ENCODE measurements at regions of chr1 and their contacts with region 1.

Region 1: GRCh38 chr1:231421993-231422764 is at the start of gene EGLN1:
- DNase-seq: peak; percentile 79
- H3K4me3 Mint-ChIP-seq: peak within 1 kb of the TSS; percentile 81
- H3K27ac Mint-ChIP-seq: peak within 1 kb of the TSS; percentile 89
- H3K4me1 Mint-ChIP-seq: peaks cover 35% of the 10 kb centered on the region
- H3K27me3 Mint-ChIP-seq: no peaks in the 10 kb centered on the region
- total RNA-seq, gene EGLN1: 9.6 to 9.8 TPM

Region 2: DNA sequence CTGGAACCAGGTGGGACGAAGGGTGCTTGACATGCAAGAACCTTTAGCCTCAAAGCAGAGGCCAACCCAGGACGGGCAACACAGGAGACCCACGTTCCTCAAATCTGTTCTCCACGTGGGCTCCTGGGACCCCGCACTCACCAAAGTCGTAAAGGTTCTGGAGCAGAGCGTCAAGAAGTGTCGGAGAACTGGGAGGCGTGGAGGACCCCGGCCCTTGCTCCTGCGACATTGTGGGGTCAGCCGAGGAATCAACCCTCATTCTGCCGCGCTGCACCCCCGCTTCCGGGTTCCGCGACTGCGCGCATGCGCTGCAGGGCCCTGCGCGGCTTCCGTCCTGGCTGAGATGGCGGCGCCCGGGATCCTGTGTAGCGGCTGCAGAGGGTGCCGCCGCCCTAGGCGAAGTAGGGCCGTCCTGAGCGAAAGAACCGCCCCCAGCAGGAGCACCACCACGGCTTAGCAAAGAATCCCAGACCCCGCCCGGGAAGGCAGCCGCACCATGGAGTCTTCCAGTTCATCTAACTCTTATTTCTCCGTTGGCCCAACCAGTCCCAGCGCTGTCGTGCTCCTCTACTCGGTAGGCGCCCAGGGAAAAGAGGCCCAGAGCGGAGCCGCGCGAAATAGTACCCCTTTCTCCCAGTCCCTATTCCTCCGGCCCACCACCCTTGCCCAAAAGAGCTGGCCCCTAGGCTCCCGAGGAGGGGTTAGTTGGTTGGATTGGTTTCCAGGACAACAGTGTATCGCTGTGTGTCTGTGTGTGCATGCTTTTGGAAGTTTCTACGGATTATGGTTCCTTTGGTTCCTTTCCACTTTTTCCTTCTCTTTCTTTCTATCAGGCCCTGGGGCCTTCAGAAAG is 181.1 kb before region 1 on chr1 and contains the start of gene GNPAT:
- CTCF ChIA-PET with region 1: no interaction called
- intact Hi-C with region 1: loop called (anchors 5 kb)
- DNase-seq: peak; percentile 90
- H3K4me3 Mint-ChIP-seq: peak within 1 kb of the TSS; percentile 97
- H3K27ac Mint-ChIP-seq: peak within 1 kb of the TSS; percentile 82
- H3K4me1 Mint-ChIP-seq: peaks cover 58% of the 10 kb centered on the region
- H3K27me3 Mint-ChIP-seq: no peaks in the 10 kb centered on the region
- total RNA-seq, gene GNPAT: 60.4 to 62.0 TPM

Region 3: GRCh38 chr1:231337472-231338269 is 84.5 kb before region 1 on chr1 and contains the start of gene EXOC8:
- CTCF ChIA-PET with region 1: interaction called, 3 read pairs
- intact Hi-C with region 1: loop called (anchors 1 kb)
- DNase-seq: peak; percentile 97
- H3K4me3 Mint-ChIP-seq: peak within 1 kb of the TSS; percentile 100
- H3K27ac Mint-ChIP-seq: peak within 1 kb of the TSS; percentile 97
- H3K4me1 Mint-ChIP-seq: peaks cover 53% of the 10 kb centered on the region
- H3K27me3 Mint-ChIP-seq: no peaks in the 10 kb centered on the region
- total RNA-seq, gene EXOC8: 11.5 to 12.0 TPM

Region 4: DNA sequence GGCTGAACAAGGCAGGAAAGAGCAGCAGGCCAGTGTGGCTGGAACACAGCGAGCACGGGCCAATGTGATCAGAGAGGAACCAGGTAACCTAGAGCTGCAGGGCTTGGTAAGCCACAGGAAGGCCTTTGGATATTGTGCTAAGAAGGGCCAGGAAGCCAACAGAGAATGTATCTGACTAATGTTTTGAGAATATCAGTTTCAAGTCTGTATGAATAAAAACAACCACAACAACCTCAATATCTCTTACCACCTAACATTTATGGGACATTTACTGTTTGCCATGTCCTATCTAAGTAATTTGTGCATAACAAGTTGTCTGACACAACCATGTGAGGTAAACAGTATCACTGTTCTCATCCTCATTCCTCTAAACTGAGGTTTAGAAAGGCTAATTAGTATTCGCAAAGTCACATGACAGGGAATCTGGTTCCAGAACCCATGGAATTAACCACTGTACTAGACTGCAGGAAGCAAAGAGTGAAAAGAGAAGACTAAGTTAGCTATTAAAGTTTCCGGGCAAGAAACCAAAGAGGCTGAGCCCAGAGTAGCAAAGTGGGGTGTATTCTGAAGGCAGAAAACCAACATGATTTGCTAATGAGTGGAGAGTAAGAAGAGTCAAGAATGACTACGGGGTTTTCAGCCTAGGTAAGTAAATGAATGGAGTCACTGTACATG is 45.2 kb before region 1 on chr1:
- CTCF ChIA-PET with region 1: interaction called, 3 read pairs
- intact Hi-C with region 1: loop called (anchors 5 kb)
- DNase-seq: peak; percentile 31
- H3K4me3 Mint-ChIP-seq: no peak overlapping the region
- H3K27ac Mint-ChIP-seq: peak overlapping the region; percentile 24
- H3K4me1 Mint-ChIP-seq: peaks cover 43% of the 10 kb centered on the region
- H3K27me3 Mint-ChIP-seq: no peaks in the 10 kb centered on the region

Region 5: GRCh38 chr1:231460614-231461013 is 38.4 kb after region 1 on chr1:
- CTCF ChIA-PET with region 1: no interaction called
- intact Hi-C with region 1: loop called (anchors 1 kb)
- DNase-seq: peak; percentile 81
- H3K4me3 Mint-ChIP-seq: no peak overlapping the region
- H3K27ac Mint-ChIP-seq: no peak overlapping the region
- H3K4me1 Mint-ChIP-seq: peaks cover 25% of the 10 kb centered on the region
- H3K27me3 Mint-ChIP-seq: peaks cover 63% of the 10 kb centered on the region

Region 6: GRCh38 chr1:231528172-231529029 is 106.2 kb after region 1 on chr1 and contains the start of gene TSNAX:
- CTCF ChIA-PET with region 1: interaction called, 6 read pairs
- intact Hi-C with region 1: loop called (anchors 1 kb)
- DNase-seq: peak; percentile 86
- H3K4me3 Mint-ChIP-seq: peak within 1 kb of the TSS; percentile 96
- H3K27ac Mint-ChIP-seq: peak within 1 kb of the TSS; percentile 97
- H3K4me1 Mint-ChIP-seq: peaks cover 47% of the 10 kb centered on the region
- H3K27me3 Mint-ChIP-seq: no peaks in the 10 kb centered on the region
- total RNA-seq, gene TSNAX: 25.7 to 28.2 TPM

Region 7: DNA sequence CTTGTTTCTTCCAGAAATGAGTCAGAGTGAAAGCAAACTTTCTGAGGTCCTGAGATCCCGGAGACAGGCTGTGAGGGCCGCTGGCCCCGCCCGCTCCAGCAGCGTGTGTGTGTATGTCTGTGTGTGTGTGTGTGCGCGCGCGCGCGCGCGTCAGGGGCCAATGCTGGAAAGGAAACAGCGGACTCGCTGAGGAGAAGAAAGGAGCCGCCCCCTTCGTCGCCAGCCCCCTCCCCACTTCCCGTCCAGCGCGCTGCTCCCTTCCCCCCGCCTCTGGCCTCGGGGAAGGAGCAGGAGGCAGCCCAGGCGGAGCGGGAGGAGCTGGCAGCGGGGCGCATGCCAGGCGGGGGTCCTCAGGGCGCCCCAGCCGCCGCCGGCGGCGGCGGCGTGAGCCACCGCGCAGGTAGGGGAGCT is 204.4 kb after region 1 on chr1 and contains the start of gene DISC1:
- CTCF ChIA-PET with region 1: no interaction called
- intact Hi-C with region 1: loop called (anchors 1 kb)
- DNase-seq: peak; percentile 76
- H3K4me3 Mint-ChIP-seq: peak within 1 kb of the TSS; percentile 82
- H3K27ac Mint-ChIP-seq: peak within 1 kb of the TSS; percentile 78
- H3K4me1 Mint-ChIP-seq: peaks cover 28% of the 10 kb centered on the region
- H3K27me3 Mint-ChIP-seq: no peaks in the 10 kb centered on the region
- total RNA-seq, gene DISC1: 4.8 to 5.0 TPM